CD8-positive, alpha-beta T cell (primary cell): ENCODE measurements at regions of chr10 and their contacts with region 1.

Region 1: DNA sequence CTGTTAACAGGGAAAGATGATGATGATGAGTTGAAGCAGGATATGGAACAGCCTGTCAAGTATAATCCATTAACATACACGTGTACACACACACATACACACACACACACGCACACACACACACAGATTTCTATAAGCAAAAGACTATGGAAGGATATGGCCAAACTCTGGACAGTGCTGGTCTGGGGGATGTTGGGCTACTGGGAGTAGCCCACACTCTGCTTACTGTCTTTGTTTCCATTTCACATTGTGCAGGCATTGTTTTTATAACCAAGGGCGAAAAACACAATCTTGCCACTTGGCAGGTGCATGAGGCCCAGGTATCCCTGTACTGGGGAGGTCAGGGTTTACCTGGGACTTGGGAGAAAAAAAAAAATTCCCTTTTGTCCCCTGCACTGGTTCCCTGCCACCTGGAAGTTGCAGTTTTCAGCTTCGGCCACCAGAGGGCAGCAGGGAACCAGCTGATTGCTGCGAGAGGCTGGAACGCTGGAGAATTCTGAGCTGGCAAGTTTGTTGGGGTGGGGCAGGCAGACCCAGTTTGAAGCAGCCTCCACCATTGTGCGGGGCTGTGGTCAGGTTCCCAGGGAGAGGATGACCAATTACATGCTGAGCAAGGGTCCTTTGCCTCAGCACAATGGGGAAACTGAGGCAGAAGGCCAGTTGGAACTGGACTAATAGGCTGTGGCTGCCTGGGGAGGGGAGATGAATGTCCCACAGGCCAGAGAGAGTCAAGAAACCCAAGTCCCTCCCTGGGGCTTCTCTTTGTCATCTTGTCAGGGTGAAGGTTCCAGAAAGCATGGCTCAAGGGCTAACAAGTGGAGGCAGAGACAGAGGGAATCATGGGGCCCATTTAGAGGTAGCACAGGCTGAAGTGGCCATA is 27.3 kb downstream of the PPIF start:
- DNase-seq: peak; percentile 54 to 88 (median 74)
- ATAC-seq: peak; percentile 83
- H3K4me3 ChIP-seq: no peak overlapping the region
- H3K4me3 Mint-ChIP-seq: no peak overlapping the region
- H3K27ac ChIP-seq: no peak overlapping the region
- H3K27ac Mint-ChIP-seq: peak overlapping the region; percentile 7
- H3K4me1 ChIP-seq: no peaks in the 10 kb centered on the region
- H3K4me1 Mint-ChIP-seq: peaks cover 5% of the 10 kb centered on the region
- H3K27me3 ChIP-seq: no peaks in the 10 kb centered on the region
- H3K27me3 Mint-ChIP-seq: no peaks in the 10 kb centered on the region
- CTCF ChIP-seq: peak; percentile 98

Region 2: GRCh38 chr10:79116801-79117723 is 257.5 kb before region 1 on chr10:
- CTCF ChIA-PET with region 1: no interaction called
- POLR2A ChIA-PET with region 1: no interaction called
- intact Hi-C with region 1: no loop called
- DNase-seq: no peak
- ATAC-seq: no peak
- H3K4me3 ChIP-seq: no peak overlapping the region
- H3K4me3 Mint-ChIP-seq: no peak overlapping the region
- H3K27ac ChIP-seq: no peak overlapping the region
- H3K27ac Mint-ChIP-seq: no peak overlapping the region
- H3K4me1 ChIP-seq: peaks cover 22% of the 10 kb centered on the region
- H3K4me1 Mint-ChIP-seq: peaks cover 40% of the 10 kb centered on the region
- H3K27me3 ChIP-seq: no peaks in the 10 kb centered on the region
- H3K27me3 Mint-ChIP-seq: no peaks in the 10 kb centered on the region
- CTCF ChIP-seq: no peak

Region 3: DNA sequence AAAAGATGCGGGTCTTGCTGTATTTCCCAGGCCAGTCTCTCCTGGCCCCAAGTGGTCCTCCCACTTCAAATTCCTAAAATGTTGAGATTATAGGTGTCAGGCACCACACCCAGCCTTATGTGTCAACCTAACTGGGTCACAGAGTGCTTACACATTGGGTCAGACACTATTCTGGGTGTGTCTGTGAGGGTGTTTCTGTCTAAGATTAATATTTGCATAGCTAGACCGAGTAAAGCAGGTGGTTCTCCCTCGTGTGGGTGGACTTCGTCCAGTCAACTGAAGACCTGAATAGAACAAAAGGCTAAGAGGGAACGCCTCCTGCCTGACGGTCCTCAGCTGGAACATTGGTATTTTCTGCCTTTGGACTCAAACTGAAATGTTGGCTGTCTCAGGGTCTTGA is 15.8 kb before region 1 on chr10:
- CTCF ChIA-PET with region 1: interaction called, 18 read pairs
- POLR2A ChIA-PET with region 1: no interaction called
- intact Hi-C with region 1: no loop called
- DNase-seq: peak in 1 of 9 experiments; percentile 9
- ATAC-seq: no peak
- H3K4me3 ChIP-seq: no peak overlapping the region
- H3K4me3 Mint-ChIP-seq: no peak overlapping the region
- H3K27ac ChIP-seq: no peak overlapping the region
- H3K27ac Mint-ChIP-seq: no peak overlapping the region
- H3K4me1 ChIP-seq: no peaks in the 10 kb centered on the region
- H3K4me1 Mint-ChIP-seq: peaks cover 21% of the 10 kb centered on the region
- H3K27me3 ChIP-seq: no peaks in the 10 kb centered on the region
- H3K27me3 Mint-ChIP-seq: no peaks in the 10 kb centered on the region
- CTCF ChIP-seq: no peak

Region 4: DNA sequence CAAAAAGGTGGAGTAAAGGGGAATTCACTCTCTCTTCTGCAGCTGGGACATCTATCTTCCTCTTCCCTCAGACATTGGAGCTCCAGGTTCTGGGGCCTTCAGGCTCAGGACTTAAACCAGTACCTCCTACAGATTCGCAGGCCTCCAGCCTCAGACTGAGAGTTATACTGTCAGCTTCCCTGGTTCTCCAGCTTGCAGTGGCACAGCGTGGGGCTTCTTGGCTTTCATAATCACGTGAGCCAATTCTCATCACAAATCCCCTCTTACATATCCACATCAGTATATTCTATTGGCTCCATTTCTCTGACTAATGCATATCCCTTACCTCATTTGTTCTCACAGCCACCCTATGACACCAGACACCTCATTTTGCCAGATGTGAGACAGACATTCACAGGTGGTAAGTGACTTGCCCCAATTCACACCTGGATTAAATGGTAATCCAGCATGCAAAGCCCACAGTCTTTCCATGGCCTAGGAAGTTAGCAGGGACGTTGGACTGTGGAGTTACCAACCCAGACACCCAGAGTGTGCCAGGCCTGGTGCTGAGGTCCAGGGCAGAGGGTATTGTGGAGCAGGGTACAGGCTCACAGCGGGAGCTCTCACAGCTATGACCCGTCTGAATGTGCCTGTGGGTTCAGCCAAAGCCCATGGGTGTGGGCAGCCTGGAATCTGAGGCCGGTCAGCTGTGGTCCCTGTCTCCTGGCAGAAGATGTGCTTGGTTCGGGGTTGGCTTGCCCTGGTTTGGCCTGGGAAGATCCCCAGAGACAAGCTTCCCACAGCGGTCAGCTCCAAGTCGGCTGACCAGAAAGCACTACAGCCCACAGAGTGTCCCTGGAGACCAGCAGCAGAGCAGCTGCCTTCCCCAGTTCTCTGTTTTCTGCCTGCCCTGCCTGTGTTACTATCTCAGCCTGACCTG is 89.3 kb after region 1 on chr10:
- CTCF ChIA-PET with region 1: interaction called, 83 read pairs
- POLR2A ChIA-PET with region 1: no interaction called
- intact Hi-C with region 1: loop called (anchors 1 kb)
- DNase-seq: peak in 1 of 9 experiments; percentile 44
- ATAC-seq: no peak
- H3K4me3 ChIP-seq: no peak overlapping the region
- H3K4me3 Mint-ChIP-seq: no peak overlapping the region
- H3K27ac ChIP-seq: no peak overlapping the region
- H3K27ac Mint-ChIP-seq: no peak overlapping the region
- H3K4me1 ChIP-seq: no peaks in the 10 kb centered on the region
- H3K4me1 Mint-ChIP-seq: no peaks in the 10 kb centered on the region
- H3K27me3 ChIP-seq: no peaks in the 10 kb centered on the region
- H3K27me3 Mint-ChIP-seq: peaks cover 2% of the 10 kb centered on the region
- CTCF ChIP-seq: no peak

Region 5: GRCh38 chr10:79487296-79488194 is 113.0 kb after region 1 on chr10:
- CTCF ChIA-PET with region 1: interaction called, 27 read pairs
- POLR2A ChIA-PET with region 1: no interaction called
- intact Hi-C with region 1: loop called (anchors 1 kb)
- DNase-seq: peak in 4 of 9 experiments; percentile 22 to 55 (median 34)
- ATAC-seq: no peak
- H3K4me3 ChIP-seq: no peak overlapping the region
- H3K4me3 Mint-ChIP-seq: no peak overlapping the region
- H3K27ac ChIP-seq: no peak overlapping the region
- H3K27ac Mint-ChIP-seq: no peak overlapping the region
- H3K4me1 ChIP-seq: no peaks in the 10 kb centered on the region
- H3K4me1 Mint-ChIP-seq: no peaks in the 10 kb centered on the region
- H3K27me3 ChIP-seq: no peaks in the 10 kb centered on the region
- H3K27me3 Mint-ChIP-seq: no peaks in the 10 kb centered on the region
- CTCF ChIP-seq: peak; percentile 53

Region 6: DNA sequence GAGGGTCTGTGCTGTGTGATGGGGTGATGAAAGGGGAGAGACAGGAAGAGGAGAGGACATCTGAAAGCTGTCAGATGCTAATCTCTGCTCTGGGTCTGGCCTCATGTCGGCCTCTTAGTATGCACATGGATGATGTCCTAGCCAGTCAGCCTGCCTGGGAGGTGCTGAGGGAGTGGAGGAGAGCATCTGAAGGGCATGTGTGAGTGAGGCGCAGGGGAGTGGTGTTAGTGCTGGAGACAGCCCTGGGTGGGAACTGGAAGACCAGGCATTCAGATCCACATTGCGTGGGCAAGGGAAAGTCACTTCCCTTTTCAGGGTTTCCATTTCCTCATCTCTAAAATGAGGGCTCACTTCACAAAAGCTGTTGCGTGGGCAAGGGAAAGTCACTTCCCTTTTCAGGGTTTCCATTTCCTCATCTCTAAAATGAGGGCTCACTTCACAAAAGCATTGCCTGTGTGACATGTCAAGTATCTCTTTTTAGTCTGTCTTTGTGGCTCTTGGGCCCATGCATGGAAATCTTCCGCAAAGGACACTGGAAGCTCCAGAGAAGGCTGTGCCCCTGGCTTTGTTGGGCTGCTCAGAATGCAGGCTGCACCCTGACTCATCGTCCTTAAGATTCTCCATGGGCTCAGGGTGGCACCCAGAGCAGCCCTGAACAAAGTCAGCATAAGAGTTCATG is 564.3 kb after region 1 on chr10:
- CTCF ChIA-PET with region 1: no interaction called
- POLR2A ChIA-PET with region 1: no interaction called
- intact Hi-C with region 1: loop called in 1 of 2 experiments (anchors 10 kb)
- DNase-seq: peak in 2 of 9 experiments; percentile 45 to 46
- ATAC-seq: peak; percentile 20
- H3K4me3 ChIP-seq: no peak overlapping the region
- H3K4me3 Mint-ChIP-seq: no peak overlapping the region
- H3K27ac ChIP-seq: no peak overlapping the region
- H3K27ac Mint-ChIP-seq: peak overlapping the region; percentile 14
- H3K4me1 ChIP-seq: peaks cover 11% of the 10 kb centered on the region
- H3K4me1 Mint-ChIP-seq: peaks cover 15% of the 10 kb centered on the region
- H3K27me3 ChIP-seq: no peaks in the 10 kb centered on the region
- H3K27me3 Mint-ChIP-seq: peaks cover 18% of the 10 kb centered on the region
- CTCF ChIP-seq: no peak